ENCODE measurements at regions of chr4 and their contacts with region 1.

Region 1: DNA sequence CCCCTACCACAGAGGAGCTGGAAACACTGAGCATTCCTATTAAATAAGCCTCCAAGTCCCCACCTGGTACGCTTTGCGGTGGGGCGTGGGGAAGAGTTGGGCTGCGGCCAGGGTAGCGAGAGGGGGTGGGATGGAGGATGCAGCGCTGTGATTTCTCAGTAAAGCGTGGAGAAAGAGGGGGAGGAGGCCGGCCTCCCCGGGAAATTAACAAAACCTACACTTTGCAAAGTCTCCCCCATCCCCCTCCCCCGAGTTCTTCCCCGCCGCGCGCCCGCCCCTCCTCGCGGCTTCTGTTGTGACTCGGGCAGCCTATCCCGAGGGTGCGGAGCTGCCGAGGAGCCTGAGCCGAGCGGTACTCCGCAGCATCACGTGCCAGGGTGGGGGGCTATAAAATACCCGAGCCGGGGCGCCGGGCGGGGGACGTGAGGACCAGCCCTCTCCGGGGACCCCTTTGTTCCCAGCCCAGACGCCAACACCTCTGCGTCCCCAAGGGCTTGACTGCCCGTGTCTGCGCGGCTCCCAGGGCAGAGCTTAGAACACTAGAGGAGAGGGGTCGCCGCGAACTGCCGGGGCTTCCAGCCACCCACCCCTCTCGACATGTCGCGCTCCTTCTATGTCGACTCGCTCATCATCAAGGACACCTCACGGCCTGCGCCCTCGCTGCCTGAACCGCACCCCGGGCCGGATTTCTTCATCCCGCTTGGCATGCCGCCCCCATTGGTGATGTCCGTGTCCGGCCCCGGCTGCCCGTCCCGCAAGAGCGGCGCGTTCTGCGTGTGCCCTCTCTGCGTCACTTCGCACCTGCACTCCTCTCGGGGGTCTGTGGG is at the start of gene GSX2:
- DNase-seq: no peak
- H3K4me3 Mint-ChIP-seq: peak within 1 kb of the TSS; percentile 62
- H3K27ac Mint-ChIP-seq: no peak within 1 kb of the TSS
- H3K4me1 Mint-ChIP-seq: peaks cover 34% of the 10 kb centered on the region
- H3K27me3 Mint-ChIP-seq: peaks cover 88% of the 10 kb centered on the region
- total RNA-seq, gene GSX2: not detected in 2 replicates

Region 2: DNA sequence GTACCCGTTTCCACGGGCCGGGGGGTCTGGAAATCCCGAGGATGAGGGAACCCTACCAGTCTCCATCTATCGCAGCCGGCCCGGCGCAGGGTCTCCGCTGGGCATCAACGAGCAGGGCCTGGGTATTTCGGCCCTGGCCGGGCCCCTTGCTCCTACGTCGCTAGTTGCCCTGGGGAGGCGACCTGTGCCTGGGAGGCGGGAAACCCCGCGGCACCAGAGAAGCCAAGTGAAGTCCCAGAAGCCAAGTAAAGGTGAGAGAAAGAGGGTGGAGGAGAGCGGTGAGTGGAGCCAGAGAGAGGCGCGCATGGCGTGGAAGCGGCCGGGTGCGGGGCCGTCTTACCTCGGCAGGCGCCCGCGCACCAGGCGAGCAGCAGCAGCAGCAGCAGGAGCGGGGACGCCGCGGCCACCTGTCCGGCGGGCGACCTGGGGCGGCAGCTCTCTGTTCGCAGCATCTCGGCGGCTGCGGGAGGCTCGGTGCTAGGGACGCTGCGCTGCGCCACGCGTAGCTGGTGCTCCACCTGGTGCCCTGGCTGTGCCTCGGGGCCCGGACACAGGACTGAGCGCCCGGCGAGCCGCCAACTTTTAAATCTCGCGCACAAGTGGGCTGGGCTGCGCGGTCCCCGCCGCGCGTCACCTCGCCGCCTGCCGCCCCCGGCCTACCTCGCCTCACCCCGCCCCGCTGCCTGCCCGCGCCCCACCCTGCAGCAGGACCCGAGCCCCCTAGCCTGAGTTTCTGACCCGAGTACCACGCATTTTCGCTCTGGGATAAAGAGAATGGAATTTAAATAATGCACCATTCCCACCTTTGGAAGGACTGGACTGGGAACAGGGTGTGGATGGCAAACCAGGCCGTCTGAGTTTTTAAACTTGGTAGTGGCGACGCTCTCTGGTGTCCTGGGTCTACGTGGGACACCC is 1536.0 kb after region 1 on chr4 and contains the start of gene NMU:
- intact Hi-C with region 1: loop called (anchors 10 kb)
- DNase-seq: no peak
- H3K4me3 Mint-ChIP-seq: peak within 1 kb of the TSS; percentile 43
- H3K27ac Mint-ChIP-seq: no peak within 1 kb of the TSS
- H3K4me1 Mint-ChIP-seq: peaks cover 10% of the 10 kb centered on the region
- H3K27me3 Mint-ChIP-seq: peaks cover 57% of the 10 kb centered on the region
- total RNA-seq, gene NMU: 0.27 TPM in 1 of 2 replicates, not detected in the other